ENCODE measurements at regions of chr16 and their contacts with region 1.

Region 1: DNA sequence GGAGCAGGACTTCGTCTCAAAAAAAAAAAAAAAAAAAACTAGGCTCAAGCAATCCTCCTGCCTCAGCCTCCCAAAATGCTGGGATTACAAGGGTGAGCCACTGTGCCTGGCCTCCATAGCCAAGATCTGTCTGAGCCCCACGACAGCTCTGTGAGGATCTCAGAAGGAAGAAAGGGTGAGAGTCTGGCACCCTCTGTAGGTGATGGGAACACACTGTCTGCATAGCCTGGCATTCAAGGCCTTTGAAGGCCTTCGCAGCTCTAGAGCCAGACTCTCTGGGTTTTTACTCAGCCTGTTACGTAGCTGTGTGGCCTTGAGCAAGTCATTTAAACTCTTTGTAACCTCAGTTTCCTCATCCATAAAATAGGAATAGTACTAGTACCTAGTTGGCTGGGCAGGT is 6.3 kb upstream of the XPO6 start:
- DNase-seq: no peak
- ATAC-seq: peak; percentile 100
- H3K4me3 ChIP-seq: no peak overlapping the region
- H3K27ac ChIP-seq: no peak overlapping the region
- H3K4me1 ChIP-seq: no peaks in the 10 kb centered on the region
- H3K27me3 ChIP-seq: no peaks in the 10 kb centered on the region
- CTCF ChIP-seq: peak; percentile 73 to 85 (median 80)
- EP300 ChIP-seq: no peak
- POLR2A ChIP-seq: no peak
- RAD21 ChIP-seq: peak; percentile 87

Region 2: GRCh38 chr16:27894386-27894785 is 323.7 kb before region 1 on chr16:
- CTCF ChIA-PET with region 1: no interaction called
- POLR2A ChIA-PET with region 1: no interaction called
- RAD21 ChIA-PET with region 1: no interaction called
- SMC1A ChIA-PET with region 1: no interaction called
- in situ Hi-C with region 1: no loop called
- intact Hi-C with region 1: no loop called
- DNase-seq: no peak
- ATAC-seq: no peak
- H3K4me3 ChIP-seq: no peak overlapping the region
- H3K27ac ChIP-seq: no peak overlapping the region
- H3K4me1 ChIP-seq: no peaks in the 10 kb centered on the region
- H3K27me3 ChIP-seq: no peaks in the 10 kb centered on the region; a peak in 3 of 4 replicates
- CTCF ChIP-seq: no peak
- EP300 ChIP-seq: no peak
- POLR2A ChIP-seq: no peak
- RAD21 ChIP-seq: no peak

Region 3: DNA sequence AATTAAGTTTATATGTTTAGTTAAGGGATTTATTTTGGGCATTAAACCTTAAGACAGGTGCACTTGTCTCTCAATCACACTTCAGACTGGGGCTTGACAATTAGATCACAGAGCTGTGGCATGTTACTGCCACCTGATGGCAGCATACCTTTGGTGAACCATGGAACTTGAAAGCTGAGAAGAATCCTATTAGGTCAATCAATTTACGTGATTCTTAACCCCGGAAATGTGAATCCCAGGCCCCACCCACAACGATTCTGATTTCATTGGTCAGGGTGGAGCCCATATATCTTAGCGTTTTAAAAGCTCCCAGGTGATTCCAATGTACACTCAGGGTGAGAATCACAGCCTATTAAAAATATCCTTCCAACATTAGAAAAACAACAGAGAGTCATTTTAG is 245.6 kb before region 1 on chr16:
- CTCF ChIA-PET with region 1: interaction called, 51 read pairs
- POLR2A ChIA-PET with region 1: no interaction called
- RAD21 ChIA-PET with region 1: interaction called, 34 read pairs
- SMC1A ChIA-PET with region 1: interaction called, 18 read pairs
- in situ Hi-C with region 1: loop called (anchors 5 kb)
- intact Hi-C with region 1: loop called (anchors 1 kb)
- DNase-seq: peak; percentile 17
- ATAC-seq: peak; percentile 90
- H3K4me3 ChIP-seq: no peak overlapping the region
- H3K27ac ChIP-seq: no peak overlapping the region
- H3K4me1 ChIP-seq: no peaks in the 10 kb centered on the region
- H3K27me3 ChIP-seq: no peaks in the 10 kb centered on the region
- CTCF ChIP-seq: peak; percentile 69 to 73 (median 71)
- EP300 ChIP-seq: no peak
- POLR2A ChIP-seq: no peak
- RAD21 ChIP-seq: peak; percentile 58

Region 4: GRCh38 chr16:28063641-28064061 is 154.5 kb before region 1 on chr16 and contains the start of gene GSG1L:
- CTCF ChIA-PET with region 1: interaction called, 28 read pairs
- POLR2A ChIA-PET with region 1: no interaction called
- RAD21 ChIA-PET with region 1: interaction called, 3 read pairs
- SMC1A ChIA-PET with region 1: no interaction called
- in situ Hi-C with region 1: no loop called
- intact Hi-C with region 1: no loop called
- DNase-seq: no peak
- ATAC-seq: no peak
- H3K4me3 ChIP-seq: no peak within 1 kb of the TSS
- H3K27ac ChIP-seq: no peak within 1 kb of the TSS
- H3K4me1 ChIP-seq: no peaks in the 10 kb centered on the region
- H3K27me3 ChIP-seq: peaks cover 7 to 11% of the 10 kb centered on the region in 2 experiments; a peak in 3 of 4 replicates
- CTCF ChIP-seq: no peak
- EP300 ChIP-seq: no peak
- POLR2A ChIP-seq: no peak
- RAD21 ChIP-seq: no peak
- polyA plus RNA-seq, gene GSG1L: not detected

Region 5: DNA sequence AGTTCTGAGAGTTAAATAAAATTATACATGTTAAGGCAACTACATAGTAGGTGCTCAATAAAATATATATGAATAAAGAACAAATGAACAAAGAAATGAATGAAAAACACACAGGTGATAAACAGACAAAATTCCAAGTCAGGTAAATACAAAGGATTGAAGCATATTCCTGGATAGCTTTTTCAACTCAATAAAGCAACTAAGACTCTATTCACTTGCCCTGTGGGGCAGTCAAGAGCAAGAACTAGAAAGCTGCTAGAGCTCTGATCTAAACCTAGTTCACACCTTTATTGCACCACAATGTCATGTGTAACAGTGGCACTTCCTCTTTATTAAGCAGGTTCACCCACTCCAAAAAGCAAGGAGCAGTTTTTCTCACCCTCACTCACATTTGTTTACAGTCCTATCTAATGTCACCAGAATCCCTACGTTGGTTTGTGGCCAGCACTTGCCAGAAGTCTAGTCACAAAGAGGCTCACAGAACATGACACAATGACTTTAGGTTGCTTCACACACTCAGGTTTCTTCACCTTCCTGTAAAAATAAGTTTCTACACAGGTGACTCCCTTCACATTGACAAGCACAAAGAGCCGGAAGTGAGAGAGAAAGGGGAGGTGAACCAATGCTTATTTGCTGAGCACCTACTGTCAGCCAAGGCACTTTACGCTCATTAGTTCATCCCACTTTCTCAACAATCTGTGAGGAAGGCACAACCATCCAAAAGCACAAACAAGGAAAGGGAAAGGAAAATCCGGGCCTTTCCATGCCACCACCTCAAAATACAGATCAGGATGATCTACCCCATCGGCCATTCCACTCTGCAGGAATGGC is 77.1 kb before region 1 on chr16:
- CTCF ChIA-PET with region 1: interaction called, 58 read pairs
- POLR2A ChIA-PET with region 1: interaction called, 9 read pairs
- RAD21 ChIA-PET with region 1: interaction called, 63 read pairs
- SMC1A ChIA-PET with region 1: interaction called, 105 read pairs
- in situ Hi-C with region 1: no loop called
- intact Hi-C with region 1: loop called (anchors 2 kb)
- DNase-seq: peak; percentile 90
- ATAC-seq: peak; percentile 89
- H3K4me3 ChIP-seq: peak overlapping the region; percentile 34; the same call in 1 of the 2 replicates
- H3K27ac ChIP-seq: peak overlapping the region; percentile 99
- H3K4me1 ChIP-seq: peaks cover 26% of the 10 kb centered on the region
- H3K27me3 ChIP-seq: no peaks in the 10 kb centered on the region
- CTCF ChIP-seq: peak; percentile 20 to 57 (median 36); a peak in 4 of 6 replicates
- EP300 ChIP-seq: peak; percentile 74 to 85; a peak in 3 of 4 replicates
- POLR2A ChIP-seq: peak; percentile 54; the same call in 1 of the 2 replicates
- RAD21 ChIP-seq: peak; percentile 38; the same call in 1 of the 2 replicates

Region 6: GRCh38 chr16:28188085-28188916 is 29.8 kb before region 1 on chr16:
- CTCF ChIA-PET with region 1: interaction called, 91 read pairs
- POLR2A ChIA-PET with region 1: interaction called, 6 read pairs
- RAD21 ChIA-PET with region 1: interaction called, 192 read pairs
- SMC1A ChIA-PET with region 1: interaction called, 272 read pairs
- in situ Hi-C with region 1: no loop called
- intact Hi-C with region 1: no loop called
- DNase-seq: peak; percentile 91
- ATAC-seq: peak; percentile 79
- H3K4me3 ChIP-seq: peak overlapping the region; percentile 53
- H3K27ac ChIP-seq: peak overlapping the region; percentile 98
- H3K4me1 ChIP-seq: peaks cover 52% of the 10 kb centered on the region
- H3K27me3 ChIP-seq: no peaks in the 10 kb centered on the region
- CTCF ChIP-seq: no peak
- EP300 ChIP-seq: peak; percentile 40 to 82; a peak in 2 of 4 replicates
- POLR2A ChIP-seq: no peak
- RAD21 ChIP-seq: no peak